ENCODE measurements at regions of chr7 and their contacts with region 1.

Region 1: DNA sequence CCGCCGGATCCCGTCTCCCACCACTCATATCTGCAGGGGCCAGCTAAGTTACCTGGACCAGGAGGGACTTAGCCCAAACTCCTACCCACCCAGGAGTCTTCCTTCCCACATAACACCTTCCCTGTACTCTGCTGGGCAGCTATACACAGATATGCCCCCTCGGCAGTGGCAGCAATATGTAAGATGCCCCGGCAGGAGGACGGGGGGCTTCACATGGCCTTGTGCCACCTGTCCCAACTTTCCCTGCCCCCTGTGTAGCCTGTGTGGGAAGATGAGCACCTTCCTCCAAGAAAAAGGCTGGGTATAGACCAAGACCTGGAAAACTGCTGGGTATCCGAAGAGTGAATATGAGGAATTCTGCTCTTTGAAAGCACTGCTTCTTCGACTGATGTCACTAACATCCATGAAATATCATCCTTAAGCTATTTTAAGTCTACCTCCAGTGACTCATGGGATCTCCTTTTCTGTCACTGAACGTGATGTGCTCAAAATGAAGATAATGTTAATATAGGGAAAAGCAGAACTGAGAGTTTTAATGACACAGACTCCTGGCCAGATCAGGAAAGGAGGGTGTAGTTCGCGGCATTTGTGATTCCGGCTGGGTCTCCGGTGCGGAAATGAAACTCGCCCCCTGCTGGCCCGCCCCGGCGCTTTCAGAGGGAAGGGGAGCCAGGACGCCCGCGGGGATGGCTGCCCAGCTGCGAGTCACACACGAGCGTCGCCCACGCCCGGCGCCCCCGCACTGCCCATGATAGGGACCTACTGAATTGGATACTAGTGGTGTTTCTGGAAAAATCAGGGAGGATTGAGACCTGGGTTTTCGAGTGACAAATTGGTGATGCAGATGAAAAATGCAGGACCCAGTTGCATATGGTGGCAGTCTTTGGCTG is 256.9 kb upstream of the NFE2L3 start:
- DNase-seq: peak; percentile 75
- H3K4me3 Mint-ChIP-seq: peak overlapping the region; percentile 44
- H3K27ac Mint-ChIP-seq: no peak overlapping the region
- H3K4me1 Mint-ChIP-seq: peaks cover 26% of the 10 kb centered on the region
- H3K27me3 Mint-ChIP-seq: peaks cover 1% of the 10 kb centered on the region

Region 2: GRCh38 chr7:25812086-25812850 is 82.9 kb before region 1 on chr7:
- CTCF ChIA-PET with region 1: no interaction called
- POLR2A ChIA-PET with region 1: no interaction called
- intact Hi-C with region 1: no loop called
- DNase-seq: no peak
- H3K4me3 Mint-ChIP-seq: no peak overlapping the region
- H3K27ac Mint-ChIP-seq: no peak overlapping the region
- H3K4me1 Mint-ChIP-seq: no peaks in the 10 kb centered on the region
- H3K27me3 Mint-ChIP-seq: peaks cover 21% of the 10 kb centered on the region

Region 3: GRCh38 chr7:25862260-25863037 is 32.7 kb before region 1 on chr7:
- CTCF ChIA-PET with region 1: interaction called, 6 read pairs
- POLR2A ChIA-PET with region 1: no interaction called
- intact Hi-C with region 1: loop called (anchors 2 kb)
- DNase-seq: peak; percentile 98
- H3K4me3 Mint-ChIP-seq: peak overlapping the region; percentile 65
- H3K27ac Mint-ChIP-seq: peak overlapping the region; percentile 60
- H3K4me1 Mint-ChIP-seq: peaks cover 22% of the 10 kb centered on the region
- H3K27me3 Mint-ChIP-seq: peaks cover 69% of the 10 kb centered on the region

Region 4: GRCh38 chr7:25951031-25951948 is 56.1 kb after region 1 on chr7:
- CTCF ChIA-PET with region 1: interaction called, 4 read pairs
- POLR2A ChIA-PET with region 1: no interaction called
- intact Hi-C with region 1: loop called (anchors 1 kb)
- DNase-seq: peak; percentile 91
- H3K4me3 Mint-ChIP-seq: peak overlapping the region; percentile 75
- H3K27ac Mint-ChIP-seq: peak overlapping the region; percentile 56
- H3K4me1 Mint-ChIP-seq: peaks cover 11% of the 10 kb centered on the region
- H3K27me3 Mint-ChIP-seq: peaks cover 4% of the 10 kb centered on the region

Region 5: GRCh38 chr7:26078437-26079336 is 183.5 kb after region 1 on chr7:
- CTCF ChIA-PET with region 1: interaction called, 21 read pairs
- POLR2A ChIA-PET with region 1: no interaction called
- intact Hi-C with region 1: loop called (anchors 5 kb)
- DNase-seq: peak; percentile 87
- H3K4me3 Mint-ChIP-seq: no peak overlapping the region
- H3K27ac Mint-ChIP-seq: no peak overlapping the region
- H3K4me1 Mint-ChIP-seq: peaks cover 4% of the 10 kb centered on the region
- H3K27me3 Mint-ChIP-seq: peaks cover 24% of the 10 kb centered on the region

Region 6: GRCh38 chr7:26200444-26201246 is 305.5 kb after region 1 on chr7 and contains the start of gene HNRNPA2B1:
- CTCF ChIA-PET with region 1: interaction called, 10 read pairs
- POLR2A ChIA-PET with region 1: no interaction called
- intact Hi-C with region 1: loop called (anchors 2 kb)
- DNase-seq: peak; percentile 98
- H3K4me3 Mint-ChIP-seq: peak within 1 kb of the TSS; percentile 99
- H3K27ac Mint-ChIP-seq: peak within 1 kb of the TSS; percentile 100
- H3K4me1 Mint-ChIP-seq: peaks cover 39% of the 10 kb centered on the region
- H3K27me3 Mint-ChIP-seq: peaks cover 6% of the 10 kb centered on the region
- total RNA-seq, gene HNRNPA2B1: 906 to 929 TPM

Region 7: DNA sequence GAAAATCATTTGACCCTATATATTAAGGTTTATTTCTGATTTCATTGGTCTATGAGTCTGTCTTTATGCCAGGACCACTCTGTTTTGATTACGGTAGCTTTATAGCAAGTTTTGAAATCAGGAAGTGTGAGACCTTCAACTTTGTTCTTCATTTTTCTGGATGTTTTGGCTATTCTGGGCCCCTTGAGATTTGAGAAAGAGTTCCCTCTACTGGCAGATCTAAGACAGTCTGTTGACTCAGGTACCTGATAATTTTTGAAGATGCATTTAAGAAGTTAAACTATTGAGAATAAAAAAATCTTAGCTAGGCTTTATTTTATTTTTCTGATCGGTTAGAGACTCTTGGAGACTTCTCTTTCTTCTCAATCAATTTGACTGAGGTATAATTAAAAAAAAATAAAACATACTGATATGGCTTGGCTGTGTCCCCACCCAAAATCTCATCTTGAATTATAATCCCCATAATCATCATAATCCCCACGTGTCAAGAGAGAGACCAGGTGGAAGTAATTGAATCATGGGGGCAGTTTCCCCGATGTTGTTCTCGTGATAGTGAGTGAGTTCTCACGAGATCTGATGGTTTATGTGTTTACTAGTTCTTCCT is 605.7 kb after region 1 on chr7:
- CTCF ChIA-PET with region 1: interaction called, 3 read pairs
- POLR2A ChIA-PET with region 1: no interaction called
- intact Hi-C with region 1: loop called (anchors 2 kb)
- DNase-seq: no peak
- H3K4me3 Mint-ChIP-seq: no peak overlapping the region
- H3K27ac Mint-ChIP-seq: no peak overlapping the region
- H3K4me1 Mint-ChIP-seq: no peaks in the 10 kb centered on the region
- H3K27me3 Mint-ChIP-seq: peaks cover 10% of the 10 kb centered on the region